T-cell (primary cell): ENCODE measurements at regions of chr5 and their contacts with region 1.

Region 1: DNA sequence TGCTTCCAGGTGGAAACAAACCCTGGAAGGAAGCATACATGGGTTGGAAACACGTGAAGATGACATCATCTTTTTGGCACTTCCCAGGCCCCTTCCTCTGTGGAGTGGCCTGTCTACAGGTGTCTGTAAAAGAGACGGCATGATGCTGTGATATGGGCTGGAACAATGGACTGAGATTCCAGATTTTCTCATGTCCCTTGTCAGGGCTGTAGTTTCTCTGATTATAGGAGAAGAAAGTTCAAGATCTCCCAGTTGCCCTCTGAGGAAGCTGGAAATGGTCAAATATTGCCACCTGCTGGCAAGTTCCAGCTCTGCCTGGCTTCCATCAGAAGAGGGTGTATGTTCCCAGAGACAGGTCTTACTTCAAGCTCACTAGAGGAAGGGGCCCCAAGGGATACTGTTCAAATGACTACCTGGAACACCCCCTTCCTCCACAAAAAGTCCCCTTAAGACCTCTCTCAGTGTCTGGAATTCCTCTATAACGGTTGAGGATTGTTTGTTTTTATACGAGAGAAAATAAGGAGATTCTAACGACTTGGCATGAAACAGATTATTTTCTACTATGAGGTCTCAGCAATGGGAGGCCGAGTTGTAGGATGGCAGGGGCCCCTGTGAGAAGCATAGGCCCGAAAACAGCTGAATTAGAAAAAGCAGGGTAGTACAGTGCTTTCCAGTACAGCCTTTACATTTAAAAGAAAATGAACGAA is 7.3 kb upstream of the ANXA6 start:
- DNase-seq: peak; percentile 60 to 92 (median 77)
- ATAC-seq: peak; percentile 93 to 99 (median 95)
- H3K4me3 ChIP-seq: no peak overlapping the region
- H3K4me3 Mint-ChIP-seq: no peak overlapping the region
- H3K27ac ChIP-seq: no peak overlapping the region
- H3K27ac Mint-ChIP-seq: peak overlapping the region in 1 of 2 donors; percentile 2
- H3K4me1 ChIP-seq: peaks cover 7 to 8% of the 10 kb centered on the region in 2 experiments
- H3K4me1 Mint-ChIP-seq: peaks cover 20 to 41% (median 26%) of the 10 kb centered on the region in 3 donors
- H3K27me3 ChIP-seq: no peaks in the 10 kb centered on the region
- H3K27me3 Mint-ChIP-seq: no peaks in the 10 kb centered on the region

Region 2: GRCh38 chr5:150189728-150190502 is 974.9 kb before region 1 on chr5 and contains the start of gene SLC6A7:
- CTCF ChIA-PET with region 1: no interaction called
- POLR2A ChIA-PET with region 1: no interaction called
- DNase-seq: no peak
- ATAC-seq: no peak
- H3K4me3 ChIP-seq: no peak within 1 kb of the TSS
- H3K4me3 Mint-ChIP-seq: no peak within 1 kb of the TSS
- H3K27ac ChIP-seq: no peak within 1 kb of the TSS
- H3K27ac Mint-ChIP-seq: no peak within 1 kb of the TSS
- H3K4me1 ChIP-seq: no peaks in the 10 kb centered on the region
- H3K4me1 Mint-ChIP-seq: no peaks in the 10 kb centered on the region
- H3K27me3 ChIP-seq: peaks cover 14 to 53% of the 10 kb centered on the region in 2 experiments
- H3K27me3 Mint-ChIP-seq: peaks cover 31 to 55% of the 10 kb centered on the region in 2 donors
- total RNA-seq, gene SLC6A7: not detected

Region 3: DNA sequence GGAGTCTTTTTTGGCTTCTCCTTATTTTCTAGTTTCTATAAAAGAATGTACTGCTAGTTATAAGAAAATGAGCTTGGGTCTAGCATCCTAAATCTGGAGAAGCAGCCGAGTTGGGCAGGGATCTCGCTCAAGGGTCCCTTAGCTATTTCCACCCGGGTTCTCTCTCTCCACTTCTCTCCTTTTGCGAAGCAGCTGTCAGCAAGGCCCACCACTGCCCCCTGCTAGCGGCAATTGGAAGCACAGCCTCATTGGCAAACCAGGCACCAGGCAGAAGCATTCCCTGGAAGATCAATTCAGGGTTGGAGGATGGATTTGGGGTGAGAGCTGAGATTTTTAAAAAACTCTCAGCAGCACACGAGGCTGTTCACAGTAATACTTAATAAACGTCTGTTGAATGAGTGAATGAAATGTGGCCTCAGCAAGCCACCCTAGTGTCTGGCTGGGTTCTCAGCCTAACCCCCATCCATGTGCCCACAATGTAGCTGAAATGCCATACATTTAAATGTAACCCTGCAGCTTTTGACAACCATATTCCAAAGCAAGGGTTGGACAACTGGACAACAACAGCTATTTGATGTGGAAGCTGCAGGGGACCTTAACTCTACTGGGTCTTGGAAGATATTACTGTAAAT is 49.4 kb before region 1 on chr5:
- CTCF ChIA-PET with region 1: interaction called, 17 to 46 read pairs
- POLR2A ChIA-PET with region 1: interaction called in 1 of 2 experiments, 4 read pairs
- DNase-seq: peak; percentile 29 to 81 (median 67)
- ATAC-seq: peak; percentile 78 to 90 (median 81)
- H3K4me3 ChIP-seq: no peak overlapping the region
- H3K4me3 Mint-ChIP-seq: no peak overlapping the region
- H3K27ac ChIP-seq: no peak overlapping the region
- H3K27ac Mint-ChIP-seq: peak overlapping the region in 1 of 2 donors; percentile 28
- H3K4me1 ChIP-seq: peaks cover 2 to 7% of the 10 kb centered on the region in 2 experiments
- H3K4me1 Mint-ChIP-seq: peaks cover 8 to 15% (median 13%) of the 10 kb centered on the region in 3 donors
- H3K27me3 ChIP-seq: no peaks in the 10 kb centered on the region
- H3K27me3 Mint-ChIP-seq: no peaks in the 10 kb centered on the region

Region 4: GRCh38 chr5:151134238-151134637 is 30.6 kb before region 1 on chr5:
- CTCF ChIA-PET with region 1: interaction called, 25 to 137 read pairs
- POLR2A ChIA-PET with region 1: interaction called in 1 of 2 experiments, 5 read pairs
- DNase-seq: no peak
- ATAC-seq: no peak
- H3K4me3 ChIP-seq: no peak overlapping the region
- H3K4me3 Mint-ChIP-seq: no peak overlapping the region
- H3K27ac ChIP-seq: peak overlapping the region; percentile 7
- H3K27ac Mint-ChIP-seq: peak overlapping the region; percentile 74 to 97
- H3K4me1 ChIP-seq: peaks cover 26 to 61% of the 10 kb centered on the region in 2 experiments
- H3K4me1 Mint-ChIP-seq: peaks cover 75 to 86% (median 85%) of the 10 kb centered on the region in 3 donors
- H3K27me3 ChIP-seq: no peaks in the 10 kb centered on the region
- H3K27me3 Mint-ChIP-seq: no peaks in the 10 kb centered on the region

Region 5: GRCh38 chr5:151150471-151151262 is 14.2 kb before region 1 on chr5:
- CTCF ChIA-PET with region 1: interaction called, 5 to 49 read pairs
- POLR2A ChIA-PET with region 1: no interaction called
- DNase-seq: peak; percentile 45 to 86 (median 77)
- ATAC-seq: peak; percentile 81 to 93 (median 86)
- H3K4me3 ChIP-seq: peak overlapping the region; percentile 12 to 68
- H3K4me3 Mint-ChIP-seq: peak overlapping the region; percentile 42 to 96 (median 52)
- H3K27ac ChIP-seq: peak overlapping the region; percentile 89
- H3K27ac Mint-ChIP-seq: peak overlapping the region; percentile 96 to 98
- H3K4me1 ChIP-seq: peaks cover 90 to 100% of the 10 kb centered on the region in 2 experiments
- H3K4me1 Mint-ChIP-seq: peaks cover 97 to 100% (median 99%) of the 10 kb centered on the region in 3 donors
- H3K27me3 ChIP-seq: no peaks in the 10 kb centered on the region
- H3K27me3 Mint-ChIP-seq: no peaks in the 10 kb centered on the region